Esophagus squamous epithelium (tissue), 5 donors: ENCODE measurements at regions of chr15 and their contacts with region 1.

Region 1: GRCh38 chr15:97817276-97817890 is 143.1 kb upstream of the ARRDC4 start:
- DNase-seq: no peak
- H3K4me3 ChIP-seq: no peak overlapping the region
- H3K27ac ChIP-seq: no peak overlapping the region
- H3K4me1 ChIP-seq: no peaks in the 10 kb centered on the region
- H3K27me3 ChIP-seq: no peaks in the 10 kb centered on the region
- CTCF ChIP-seq: no peak
- POLR2A ChIP-seq: no peak

Region 2: GRCh38 chr15:97875513-97876280 is 58.3 kb after region 1 on chr15:
- intact Hi-C with region 1: loop called (anchors 10 kb)
- DNase-seq: no peak
- H3K4me3 ChIP-seq: peak overlapping the region in 1 of 4 donors; percentile 30
- H3K27ac ChIP-seq: no peak overlapping the region
- H3K4me1 ChIP-seq: no peaks in the 10 kb centered on the region
- H3K27me3 ChIP-seq: no peaks in the 10 kb centered on the region
- CTCF ChIP-seq: peak in 2 of 6 experiments; percentile 13 to 31
- POLR2A ChIP-seq: no peak